ENCODE measurements at regions of chr20 and their contacts with region 1.

Region 1: DNA sequence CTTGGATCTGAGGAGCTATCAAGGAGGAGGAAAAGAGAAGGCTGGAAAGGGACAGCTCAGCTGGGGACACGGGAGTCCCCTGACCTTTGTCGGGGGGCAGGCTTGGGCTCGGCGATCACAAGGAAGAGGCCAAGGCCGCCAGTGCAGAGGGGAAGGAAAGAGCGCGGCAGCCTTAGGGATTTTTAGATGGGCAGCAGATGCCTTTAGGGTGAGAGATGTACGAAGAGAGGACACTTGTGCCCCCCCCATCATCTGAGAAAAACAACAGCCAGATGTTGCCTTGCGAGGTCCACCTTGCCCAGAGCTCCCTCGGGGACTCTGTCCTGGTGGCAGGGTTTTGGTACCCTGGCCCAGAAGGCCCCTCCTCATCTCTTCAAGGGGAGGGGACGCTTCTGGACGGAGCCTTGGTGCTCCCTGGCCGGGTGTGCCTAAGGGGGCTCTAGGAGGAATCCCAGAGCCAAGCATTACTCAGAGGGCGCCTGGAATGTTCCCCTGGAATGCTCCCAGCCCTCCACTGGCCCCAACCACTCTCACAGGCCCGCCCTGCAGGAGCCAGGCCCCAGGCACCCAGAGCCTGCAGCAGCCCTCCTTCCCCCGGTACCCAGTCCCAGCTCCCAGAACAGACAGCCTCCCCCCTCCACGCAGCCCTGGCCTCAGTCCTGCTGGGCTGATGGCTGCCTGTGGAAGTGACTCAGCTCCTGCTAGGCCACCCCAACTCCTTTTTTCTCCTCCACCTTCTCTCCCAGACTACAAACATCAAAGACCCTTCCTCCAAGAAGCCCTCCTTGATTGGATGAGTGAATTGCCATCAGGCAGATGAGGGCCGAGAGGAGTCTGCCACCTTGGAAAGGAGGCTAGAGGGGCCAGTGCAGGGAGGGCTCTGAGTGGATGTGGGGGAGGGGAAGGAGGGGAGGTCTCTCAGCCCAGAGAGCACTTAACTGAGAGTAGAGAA is 1.8 kb downstream of the ADAM33 start:
- DNase-seq: no peak
- ATAC-seq: no peak
- H3K4me3 ChIP-seq: no peak overlapping the region
- H3K27ac ChIP-seq: no peak overlapping the region
- H3K4me1 ChIP-seq: no peaks in the 10 kb centered on the region
- H3K27me3 ChIP-seq: peaks cover 3% of the 10 kb centered on the region; the same call in 1 of the 2 replicates
- CTCF ChIP-seq: no peak

Region 2: GRCh38 chr20:3710703-3711483 is 30.9 kb after region 1 on chr20:
- CTCF ChIA-PET with region 1: interaction called, 12 read pairs
- POLR2A ChIA-PET with region 1: no interaction called
- in situ Hi-C with region 1: no loop called
- intact Hi-C with region 1: loop called (anchors 1 kb)
- DNase-seq: no peak
- ATAC-seq: peak; percentile 67
- H3K4me3 ChIP-seq: no peak overlapping the region
- H3K27ac ChIP-seq: no peak overlapping the region; the same call in 1 of the 2 replicates
- H3K4me1 ChIP-seq: peaks cover 4% of the 10 kb centered on the region; the same call in 1 of the 2 replicates
- H3K27me3 ChIP-seq: no peaks in the 10 kb centered on the region
- CTCF ChIP-seq: peak; percentile 97

Region 3: DNA sequence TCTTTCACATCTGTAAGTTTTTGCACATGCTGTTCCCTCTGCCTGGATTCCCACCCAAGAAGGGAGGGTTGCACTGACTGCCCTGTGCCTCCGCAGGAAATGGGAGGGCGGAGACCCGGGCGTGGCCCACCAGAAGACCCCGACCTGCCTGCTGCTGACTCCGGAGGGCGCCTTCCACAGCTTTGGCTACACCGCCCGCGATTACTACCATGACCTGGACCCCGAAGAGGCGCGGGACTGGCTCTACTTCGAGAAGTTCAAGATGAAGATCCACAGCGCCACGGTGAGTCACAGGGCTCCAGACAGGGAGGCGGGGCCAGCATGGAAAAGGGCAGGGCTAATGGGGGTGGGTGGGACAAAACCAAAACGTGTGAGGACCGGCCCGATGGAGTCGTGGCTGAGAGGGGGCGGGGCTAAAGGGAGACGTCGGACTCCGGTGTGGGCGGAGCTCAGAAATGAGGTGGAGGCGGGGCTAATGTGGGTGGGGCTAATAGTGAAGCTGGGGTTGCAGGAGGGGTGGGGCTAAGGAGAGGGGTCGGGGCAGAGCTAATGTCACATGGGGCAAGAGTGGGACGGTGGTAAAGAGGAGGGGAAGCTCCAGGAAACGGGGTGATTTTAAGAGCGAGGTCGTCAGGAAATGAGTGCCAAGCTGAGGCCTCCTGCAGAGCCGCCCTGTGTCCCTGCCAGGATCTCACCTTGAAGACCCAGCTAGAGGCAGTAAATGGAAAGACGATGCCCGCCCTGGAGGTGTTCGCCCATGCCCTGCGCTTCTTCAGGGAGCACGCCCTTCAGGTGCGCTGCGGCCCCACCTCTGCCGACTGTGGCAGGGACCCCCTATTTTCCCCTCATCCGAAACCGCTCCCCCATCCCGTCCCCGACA is 65.0 kb after region 1 on chr20:
- CTCF ChIA-PET with region 1: interaction called, 5 read pairs
- POLR2A ChIA-PET with region 1: interaction called, 5 read pairs
- in situ Hi-C with region 1: no loop called
- intact Hi-C with region 1: loop called (anchors 10 kb)
- DNase-seq: peak; percentile 78
- ATAC-seq: peak; percentile 68
- H3K4me3 ChIP-seq: peak overlapping the region; percentile 37 to 57
- H3K27ac ChIP-seq: peak overlapping the region; percentile 32; the same call in 1 of the 2 replicates
- H3K4me1 ChIP-seq: no peaks in the 10 kb centered on the region; the same call in 1 of the 2 replicates
- H3K27me3 ChIP-seq: no peaks in the 10 kb centered on the region
- CTCF ChIP-seq: no peak

Region 4: DNA sequence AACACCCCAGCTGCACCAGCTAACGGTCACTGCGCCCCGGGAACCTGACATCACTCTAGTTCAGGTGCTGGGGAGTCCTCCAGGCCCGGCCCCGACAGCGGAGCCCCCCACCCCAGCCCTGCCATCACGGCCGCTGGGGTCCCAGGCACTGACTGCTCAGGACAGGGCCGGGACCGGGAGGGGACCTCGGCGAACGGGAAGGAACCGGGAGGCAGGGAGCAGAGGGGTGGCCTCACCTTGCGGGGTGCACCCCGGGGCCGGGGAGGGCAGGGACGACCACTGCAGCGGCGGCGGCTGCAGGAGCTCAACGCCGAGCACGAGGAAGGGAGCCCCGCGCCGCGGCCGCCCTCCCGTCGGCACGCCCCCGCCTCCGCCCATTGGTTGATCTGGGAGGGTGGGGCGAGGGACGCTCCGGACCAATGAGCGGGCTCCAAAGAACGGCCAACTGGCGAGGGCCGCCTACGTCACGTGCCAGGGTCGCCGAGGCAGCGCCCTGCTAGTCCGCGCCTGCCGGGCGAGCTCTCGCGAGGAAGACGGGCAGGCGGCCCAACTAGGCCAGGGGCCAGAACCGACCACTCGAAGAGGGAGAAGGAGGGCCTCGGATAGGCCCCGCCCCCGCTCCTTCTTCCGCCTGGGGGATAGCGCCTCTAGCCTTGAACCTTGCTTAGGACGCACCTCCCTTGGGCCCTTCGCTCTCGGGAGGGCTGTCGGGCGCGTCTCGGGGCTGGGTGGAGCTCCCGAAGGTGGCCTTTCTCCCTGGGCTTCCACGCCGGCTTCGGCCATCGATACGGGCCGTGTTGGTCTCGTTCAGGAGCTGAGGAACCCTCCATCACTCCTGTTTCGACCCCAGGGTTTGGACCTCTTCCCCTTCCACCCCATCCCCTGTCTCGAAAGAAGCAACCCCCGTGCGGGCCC is 87.7 kb after region 1 on chr20 and contains the start of gene ADISSP:
- CTCF ChIA-PET with region 1: interaction called, 10 read pairs
- POLR2A ChIA-PET with region 1: interaction called, 3 read pairs
- in situ Hi-C with region 1: no loop called
- intact Hi-C with region 1: loop called (anchors 5 kb)
- DNase-seq: peak; percentile 88
- ATAC-seq: peak; percentile 94
- H3K4me3 ChIP-seq: peak within 1 kb of the TSS; percentile 86 to 89
- H3K27ac ChIP-seq: peak within 1 kb of the TSS; percentile 90
- H3K4me1 ChIP-seq: peaks cover 19% of the 10 kb centered on the region
- H3K27me3 ChIP-seq: no peaks in the 10 kb centered on the region
- CTCF ChIP-seq: no peak
- total RNA-seq, gene ADISSP: 100 TPM

Measured in Panc1 (cell line).